Sigmoid colon (tissue), 7 donors: ENCODE measurements at regions of chr1 and their contacts with region 1.

Region 1: DNA sequence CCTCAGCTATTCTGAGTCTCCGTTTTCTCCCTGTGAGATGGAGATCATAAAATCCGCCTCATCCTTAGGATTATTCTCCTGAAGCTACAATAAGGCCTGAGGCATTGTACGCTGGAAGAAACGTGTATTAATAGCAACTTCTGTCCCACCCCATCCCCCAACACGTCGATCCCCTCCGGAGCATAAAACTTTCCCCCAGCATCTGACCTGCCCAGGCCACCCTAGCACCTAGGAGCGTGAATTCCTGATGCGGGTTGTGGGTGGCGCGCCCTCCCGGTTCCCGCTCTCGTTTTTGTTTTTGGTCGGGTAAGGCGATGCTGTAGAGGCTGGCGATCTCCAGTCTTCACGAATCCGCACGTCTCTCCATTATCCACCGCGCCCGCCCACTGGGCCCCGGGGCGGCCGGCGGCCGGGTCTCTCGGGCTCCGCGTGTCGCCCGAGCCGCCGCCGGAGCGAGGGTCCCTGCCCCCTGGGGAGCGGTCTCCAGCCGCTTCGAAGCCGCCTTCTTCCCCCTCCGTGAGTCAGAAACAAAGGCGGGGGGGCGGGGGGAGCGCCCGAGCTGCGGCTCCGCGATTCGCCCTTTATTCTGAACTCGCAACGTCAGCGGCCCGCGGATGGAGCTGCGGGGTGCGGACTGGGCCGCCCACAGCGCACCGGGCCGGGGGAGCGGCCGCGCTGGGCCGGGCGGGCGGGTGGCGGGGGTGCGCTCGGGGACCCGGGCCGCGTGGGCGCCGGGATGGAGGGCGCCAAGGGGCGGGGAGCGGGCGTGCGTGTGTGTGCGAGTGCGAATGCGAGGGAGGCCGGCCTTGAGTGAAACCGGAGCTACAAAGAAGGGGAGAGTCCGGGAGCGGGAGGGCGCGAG is at the start of gene PLEKHO1:
- DNase-seq: peak; percentile 96
- H3K4me3 ChIP-seq: peak within 1 kb of the TSS; percentile 73 to 98 (median 96)
- H3K27ac ChIP-seq: peak within 1 kb of the TSS; percentile 98 to 100 (median 99)
- H3K4me1 ChIP-seq: peaks cover 0 to 44% (median 28%) of the 10 kb centered on the region in 4 donors
- H3K27me3 ChIP-seq: no peaks in the 10 kb centered on the region
- CTCF ChIP-seq: no peak
- EP300 ChIP-seq: peak in 1 of 4 donors; percentile 26
- POLR2A ChIP-seq: peak; percentile 54 to 79
- total RNA-seq, gene PLEKHO1: 251 to 402 (median 338) TPM

Region 2: DNA sequence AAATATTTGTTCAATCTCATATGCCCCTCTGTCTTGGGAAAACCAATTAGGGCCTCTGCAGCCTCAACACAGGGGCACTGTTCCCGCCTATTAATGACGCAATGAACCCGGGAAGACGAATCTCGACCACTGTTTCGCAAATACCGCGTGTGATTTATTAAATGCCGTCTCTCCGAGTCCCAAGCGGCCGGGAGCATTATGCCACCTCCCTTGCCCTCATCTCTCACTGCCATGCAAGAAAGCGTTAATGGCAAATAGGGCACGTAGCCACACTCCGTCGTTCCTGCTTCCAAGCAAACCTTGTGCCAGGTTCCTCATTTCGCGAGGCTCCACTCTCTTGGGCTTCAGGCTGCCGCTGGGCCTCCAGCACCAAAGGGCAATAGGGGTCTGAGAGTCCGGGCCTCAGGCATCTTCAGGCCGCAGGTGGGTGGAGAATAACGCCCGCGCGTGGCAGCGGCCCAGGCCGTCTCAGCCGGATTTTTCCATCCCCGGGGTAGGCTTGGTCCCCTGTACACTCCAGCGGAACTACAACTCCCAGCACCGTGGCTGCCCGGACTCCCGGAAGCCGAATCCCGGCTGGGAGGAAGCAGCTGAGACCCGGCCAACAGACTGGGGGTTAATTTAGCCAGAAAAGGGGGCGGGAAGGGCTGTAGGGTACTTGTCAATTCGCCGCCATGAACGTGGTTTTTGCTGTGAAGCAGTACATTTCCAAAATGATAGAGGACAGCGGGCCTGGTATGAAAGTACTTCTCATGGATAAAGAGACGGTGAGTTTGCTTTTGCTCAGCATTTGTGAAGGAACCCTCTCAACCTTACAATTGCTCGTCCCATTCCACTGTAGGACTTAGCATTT is 82.1 kb before region 1 on chr1 and contains the start of gene VPS45:
- intact Hi-C with region 1: loop called (anchors 5 kb)
- DNase-seq: peak; percentile 96
- H3K4me3 ChIP-seq: peak within 1 kb of the TSS; percentile 64 to 84 (median 71)
- H3K27ac ChIP-seq: peak within 1 kb of the TSS; percentile 97 to 99 (median 98)
- H3K4me1 ChIP-seq: peaks cover 0 to 37% (median 25%) of the 10 kb centered on the region in 4 donors
- H3K27me3 ChIP-seq: no peaks in the 10 kb centered on the region
- CTCF ChIP-seq: peak in 1 of 4 experiments; percentile 37
- EP300 ChIP-seq: peak in 1 of 4 donors; percentile 40
- POLR2A ChIP-seq: peak; percentile 30 to 44
- total RNA-seq, gene VPS45: 44.6 to 68.1 (median 56.0) TPM

Region 3: DNA sequence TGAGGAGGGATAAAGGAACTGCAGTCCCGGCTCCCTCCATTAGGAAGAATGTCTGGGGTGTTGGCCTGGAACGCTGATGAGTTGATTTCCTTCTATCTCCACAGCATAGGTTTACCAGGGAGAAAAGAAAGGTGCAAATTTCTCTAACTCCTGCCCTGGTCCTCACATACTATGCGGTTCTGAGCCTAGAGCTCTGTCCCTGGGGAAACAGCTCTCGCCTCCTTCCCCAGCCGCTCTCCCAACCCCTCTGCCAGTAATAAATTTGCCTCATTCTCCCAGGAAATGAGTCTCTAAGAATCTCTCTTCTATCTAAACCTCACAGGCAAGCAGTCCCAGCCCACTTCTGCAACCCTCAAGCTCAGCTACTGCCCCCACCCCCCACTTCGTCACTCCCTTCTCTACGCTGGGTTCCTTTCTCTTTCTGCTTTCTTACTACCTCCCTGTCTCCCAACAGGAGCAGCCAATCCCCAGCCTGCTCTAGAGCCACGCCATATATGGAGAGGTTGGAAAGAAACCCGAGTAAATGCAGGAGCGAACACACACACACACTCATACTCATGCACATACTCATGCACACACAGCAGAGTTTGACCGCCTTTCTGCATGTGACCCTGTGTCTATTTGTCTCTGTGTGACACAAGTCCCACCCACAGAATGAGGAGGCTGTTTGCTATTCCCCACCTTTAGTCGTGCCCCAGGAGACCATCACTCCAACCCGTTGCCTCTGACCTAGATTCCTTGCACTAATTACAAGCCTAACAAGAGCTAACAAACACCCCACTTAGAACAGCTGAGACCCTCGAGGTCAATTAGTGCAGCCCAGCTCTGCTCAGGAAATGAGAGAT is 13.6 kb after region 1 on chr1:
- intact Hi-C with region 1: loop called (anchors 1 kb)
- DNase-seq: peak; percentile 98
- H3K4me3 ChIP-seq: peak overlapping the region; percentile 12 to 38 (median 34)
- H3K27ac ChIP-seq: peak overlapping the region; percentile 98 to 100 (median 99)
- H3K4me1 ChIP-seq: peaks cover 0 to 78% (median 75%) of the 10 kb centered on the region in 4 donors
- H3K27me3 ChIP-seq: no peaks in the 10 kb centered on the region
- CTCF ChIP-seq: peak in 3 of 4 experiments; percentile 14 to 30 (median 25)
- EP300 ChIP-seq: peak in 2 of 4 donors; percentile 34 to 91
- POLR2A ChIP-seq: peak; percentile 91 to 92

Region 4: GRCh38 chr1:150176593-150176992 is 27.1 kb after region 1 on chr1:
- intact Hi-C with region 1: loop called (anchors 5 kb)
- DNase-seq: no peak
- H3K4me3 ChIP-seq: no peak overlapping the region
- H3K27ac ChIP-seq: no peak overlapping the region
- H3K4me1 ChIP-seq: no peaks in the 10 kb centered on the region
- H3K27me3 ChIP-seq: no peaks in the 10 kb centered on the region
- CTCF ChIP-seq: no peak
- EP300 ChIP-seq: no peak
- POLR2A ChIP-seq: no peak

Region 5: DNA sequence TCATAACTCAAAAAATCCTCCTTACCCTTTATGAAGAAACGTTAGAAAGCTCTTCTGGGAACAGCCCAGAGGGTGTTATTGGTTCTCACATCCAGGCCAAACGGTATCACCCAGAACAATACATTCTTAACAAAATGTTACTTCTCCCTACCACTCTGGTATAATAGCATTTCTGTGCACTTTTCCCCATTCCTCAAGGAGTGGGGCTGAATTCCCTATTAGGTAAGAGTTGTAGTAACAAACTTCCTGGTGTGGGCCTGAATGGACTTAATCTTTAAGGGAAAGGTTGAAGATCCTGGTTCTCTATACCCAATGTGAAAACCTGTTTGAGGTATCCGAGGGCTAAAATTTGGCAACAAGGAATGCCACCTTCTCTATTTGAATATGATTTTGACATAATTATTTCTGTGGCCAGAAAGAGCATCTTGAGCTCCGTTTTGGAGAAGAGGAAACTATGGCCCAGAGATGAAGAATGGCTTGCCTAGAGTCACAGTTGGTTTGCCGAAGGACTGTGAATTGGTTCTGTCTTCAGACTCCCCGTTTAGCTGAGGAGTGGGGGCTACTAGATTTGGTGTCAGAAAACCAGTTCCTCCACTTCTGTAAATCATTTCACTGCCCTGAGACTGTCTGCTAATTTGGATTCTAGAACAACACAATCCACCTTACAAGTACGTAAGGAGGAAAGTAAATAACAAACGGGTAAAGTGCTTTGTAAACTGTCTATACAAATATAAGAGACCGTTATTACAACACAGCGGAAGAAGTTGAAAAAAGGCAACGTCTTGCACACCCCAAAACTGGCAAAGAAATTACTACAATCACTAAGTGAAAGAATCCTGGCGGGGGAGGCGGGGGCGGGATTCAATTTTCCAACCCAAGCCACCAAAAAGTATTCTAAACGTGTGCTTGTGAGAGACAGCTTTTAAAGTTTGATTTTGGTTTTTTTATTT is 84.1 kb after region 1 on chr1:
- intact Hi-C with region 1: loop called (anchors 1 kb)
- DNase-seq: no peak
- H3K4me3 ChIP-seq: peak overlapping the region; percentile 80 to 96 (median 88)
- H3K27ac ChIP-seq: peak overlapping the region; percentile 98 to 99 (median 99)
- H3K4me1 ChIP-seq: peaks cover 0 to 20% (median 13%) of the 10 kb centered on the region in 4 donors
- H3K27me3 ChIP-seq: no peaks in the 10 kb centered on the region
- CTCF ChIP-seq: no peak
- EP300 ChIP-seq: no peak
- POLR2A ChIP-seq: no peak

Region 6: DNA sequence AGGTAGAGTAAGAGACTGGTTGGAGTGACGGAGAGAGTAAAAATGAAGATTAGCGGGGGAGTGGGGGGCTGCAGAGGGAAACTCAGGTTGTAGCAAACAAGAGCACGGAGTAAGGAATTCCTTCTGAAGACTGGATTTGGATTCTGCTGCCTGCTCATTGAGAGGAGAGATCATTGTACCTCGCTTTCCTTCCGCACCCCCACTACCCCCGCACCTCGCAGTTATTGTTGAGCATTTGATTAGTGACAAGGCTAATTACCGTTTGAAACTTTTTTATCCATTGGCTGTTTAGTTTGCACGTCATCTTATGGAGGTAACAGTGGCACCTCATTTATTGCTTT is 172.3 kb after region 1 on chr1:
- intact Hi-C with region 1: no loop called
- DNase-seq: no peak
- H3K4me3 ChIP-seq: peak overlapping the region; percentile 68 to 86 (median 78)
- H3K27ac ChIP-seq: peak overlapping the region; percentile 86 to 91 (median 88)
- H3K4me1 ChIP-seq: peaks cover 0 to 22% (median 14%) of the 10 kb centered on the region in 4 donors
- H3K27me3 ChIP-seq: no peaks in the 10 kb centered on the region
- CTCF ChIP-seq: no peak
- EP300 ChIP-seq: no peak
- POLR2A ChIP-seq: no peak